Thyroid gland (tissue), 4 donors: ENCODE measurements at regions of chr1 and their contacts with region 1.

Region 1: GRCh38 chr1:89483010-89483756 is 41.4 kb upstream of the LRRC8B start:
- DNase-seq: peak; percentile 75 to 82
- H3K4me3 ChIP-seq: no peak overlapping the region
- H3K27ac ChIP-seq: no peak overlapping the region
- H3K4me1 ChIP-seq: no peaks in the 10 kb centered on the region
- H3K27me3 ChIP-seq: no peaks in the 10 kb centered on the region
- CTCF ChIP-seq: peak; percentile 37 to 71 (median 63)
- POLR2A ChIP-seq: no peak

Region 2: GRCh38 chr1:89598450-89599331 is 115.5 kb after region 1 on chr1:
- intact Hi-C with region 1: loop called (anchors 5 kb)
- DNase-seq: no peak
- H3K4me3 ChIP-seq: no peak overlapping the region
- H3K27ac ChIP-seq: no peak overlapping the region
- H3K4me1 ChIP-seq: no peaks in the 10 kb centered on the region
- H3K27me3 ChIP-seq: no peaks in the 10 kb centered on the region
- CTCF ChIP-seq: peak; percentile 30 to 69 (median 47)
- POLR2A ChIP-seq: no peak

Region 3: DNA sequence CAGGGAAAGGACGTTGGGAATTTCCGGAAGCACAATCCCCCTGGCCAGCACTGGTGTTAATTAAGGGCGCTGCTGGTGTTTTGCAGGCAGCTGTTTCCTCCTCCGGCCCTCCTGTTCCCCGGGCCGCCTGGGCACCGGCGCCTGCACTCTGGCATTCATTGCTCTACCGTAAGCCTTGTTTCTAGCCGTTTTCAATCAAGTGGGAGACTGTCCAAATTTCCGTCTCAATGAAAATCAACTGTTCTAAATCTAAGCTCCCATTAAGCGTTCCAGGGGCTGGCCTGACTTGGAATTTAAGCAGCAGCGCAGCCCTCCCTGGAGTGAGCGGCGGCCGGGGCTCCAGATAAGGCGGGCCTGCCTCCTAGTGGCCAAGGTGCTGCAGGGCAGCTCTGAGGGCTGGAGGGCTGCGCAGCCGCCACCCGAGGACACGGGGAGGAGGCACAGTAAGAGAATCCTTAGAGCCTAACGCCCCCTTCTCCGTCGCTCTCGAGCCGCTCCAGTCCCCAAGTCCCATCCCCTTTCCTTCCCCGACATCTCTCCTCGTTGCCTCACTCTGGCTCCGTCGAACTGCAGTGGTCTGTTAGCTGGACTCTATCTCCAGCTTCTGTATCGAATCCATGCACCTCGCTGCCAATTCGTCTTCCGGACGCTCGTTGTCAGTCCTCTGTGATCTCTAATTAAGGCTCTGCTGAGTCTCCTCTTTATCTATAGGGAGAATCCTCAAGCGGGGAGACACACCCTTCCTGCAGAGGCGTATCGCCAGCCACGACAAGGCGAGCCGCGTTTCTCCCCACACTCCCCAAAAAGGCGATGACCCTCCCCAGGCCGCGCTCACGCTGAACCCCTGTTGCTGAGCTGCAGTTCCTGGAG is 279.8 kb after region 1 on chr1:
- intact Hi-C with region 1: loop called (anchors 10 kb)
- DNase-seq: peak; percentile 79 to 86
- H3K4me3 ChIP-seq: peak overlapping the region in 2 of 3 donors; percentile 13 to 70
- H3K27ac ChIP-seq: peak overlapping the region in 2 of 3 donors; percentile 17 to 75
- H3K4me1 ChIP-seq: peaks cover 0 to 10% of the 10 kb centered on the region in 2 donors
- H3K27me3 ChIP-seq: no peaks in the 10 kb centered on the region
- CTCF ChIP-seq: peak; percentile 78 to 97 (median 94)
- POLR2A ChIP-seq: no peak